ENCODE measurements at regions of chr10 and their contacts with region 1.

Region 1: GRCh38 chr10:3805791-3806461 is 20.9 kb upstream of the KLF6 start:
- DNase-seq: peak; percentile 24 to 74
- ATAC-seq: peak in 7 of 8 donors; percentile 9 to 64 (median 27)
- H3K4me3 ChIP-seq: peak overlapping the region in 6 of 10 donors; percentile 1 to 25 (median 8)
- H3K27ac ChIP-seq: peak overlapping the region; percentile 51 to 95 (median 89)
- H3K4me1 ChIP-seq: peaks cover 12 to 88% (median 71%) of the 10 kb centered on the region in 9 donors
- H3K27me3 ChIP-seq: no peaks in the 10 kb centered on the region
- CTCF ChIP-seq: no peak

Region 2: DNA sequence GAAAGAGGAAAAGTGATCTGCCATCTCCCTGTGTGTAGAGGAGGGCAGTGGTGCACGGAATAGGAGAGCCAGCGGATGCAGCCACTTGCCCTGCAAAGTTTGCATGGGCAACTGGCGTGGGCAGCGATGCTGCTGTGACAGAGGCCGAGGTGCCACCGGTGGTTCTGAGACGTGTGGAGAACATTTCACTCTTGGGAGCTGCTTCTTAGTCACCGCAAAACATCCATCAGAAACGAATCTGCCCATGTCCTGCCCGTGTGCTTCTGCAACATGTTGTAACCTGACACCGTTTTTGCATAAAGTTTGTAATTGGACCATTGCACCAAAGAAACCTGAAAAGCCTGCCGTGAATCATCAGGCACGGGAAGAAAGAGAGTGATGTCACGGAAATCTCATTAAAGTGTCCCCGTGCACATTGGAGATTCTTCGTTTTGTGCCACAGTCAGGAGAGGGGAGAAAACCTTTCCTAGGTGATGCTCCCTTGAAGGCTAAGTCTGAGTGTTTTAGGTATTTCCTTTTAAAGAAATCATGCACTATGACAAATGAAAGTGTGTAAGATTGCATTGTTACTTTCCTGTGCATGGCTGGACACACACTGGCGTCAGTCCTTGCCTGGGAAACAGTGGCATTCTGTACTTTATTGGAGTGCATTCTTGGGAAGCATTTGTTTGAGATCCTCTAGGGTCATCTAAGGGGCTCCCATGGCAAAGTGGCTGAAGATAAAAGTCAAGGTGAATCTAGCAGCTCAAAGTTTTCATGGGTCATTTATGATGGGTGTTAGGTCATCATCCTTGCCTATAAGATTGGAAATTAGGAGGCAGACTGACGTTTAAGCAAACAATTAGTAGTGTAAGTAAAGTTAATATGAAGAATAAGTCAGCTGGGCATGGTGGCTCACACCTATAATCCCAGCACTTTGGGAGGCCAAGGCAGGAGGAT is 323.5 kb before region 1 on chr10:
- intact Hi-C with region 1: no loop called
- DNase-seq: peak in 1 of 2 donors; percentile 39
- ATAC-seq: peak; percentile 68 to 84 (median 77)
- H3K4me3 ChIP-seq: peak overlapping the region in 5 of 10 donors; percentile 0 to 34 (median 23)
- H3K27ac ChIP-seq: peak overlapping the region in 5 of 10 donors; percentile 9 to 47 (median 29)
- H3K4me1 ChIP-seq: peaks cover 10 to 35% (median 27%) of the 10 kb centered on the region in 9 donors
- H3K27me3 ChIP-seq: no peaks in the 10 kb centered on the region
- CTCF ChIP-seq: no peak

Region 3: GRCh38 chr10:3902054-3902808 is 96.3 kb after region 1 on chr10:
- intact Hi-C with region 1: loop called in 1 of 10 experiments (anchors 5 kb)
- DNase-seq: no peak
- ATAC-seq: peak; percentile 44 to 80 (median 72)
- H3K4me3 ChIP-seq: no peak overlapping the region
- H3K27ac ChIP-seq: peak overlapping the region in 7 of 10 donors; percentile 25 to 74 (median 44)
- H3K4me1 ChIP-seq: peaks cover 0 to 23% (median 12%) of the 10 kb centered on the region in 9 donors
- H3K27me3 ChIP-seq: no peaks in the 10 kb centered on the region
- CTCF ChIP-seq: peak in 4 of 9 donors; percentile 7 to 32 (median 22)

Region 4: DNA sequence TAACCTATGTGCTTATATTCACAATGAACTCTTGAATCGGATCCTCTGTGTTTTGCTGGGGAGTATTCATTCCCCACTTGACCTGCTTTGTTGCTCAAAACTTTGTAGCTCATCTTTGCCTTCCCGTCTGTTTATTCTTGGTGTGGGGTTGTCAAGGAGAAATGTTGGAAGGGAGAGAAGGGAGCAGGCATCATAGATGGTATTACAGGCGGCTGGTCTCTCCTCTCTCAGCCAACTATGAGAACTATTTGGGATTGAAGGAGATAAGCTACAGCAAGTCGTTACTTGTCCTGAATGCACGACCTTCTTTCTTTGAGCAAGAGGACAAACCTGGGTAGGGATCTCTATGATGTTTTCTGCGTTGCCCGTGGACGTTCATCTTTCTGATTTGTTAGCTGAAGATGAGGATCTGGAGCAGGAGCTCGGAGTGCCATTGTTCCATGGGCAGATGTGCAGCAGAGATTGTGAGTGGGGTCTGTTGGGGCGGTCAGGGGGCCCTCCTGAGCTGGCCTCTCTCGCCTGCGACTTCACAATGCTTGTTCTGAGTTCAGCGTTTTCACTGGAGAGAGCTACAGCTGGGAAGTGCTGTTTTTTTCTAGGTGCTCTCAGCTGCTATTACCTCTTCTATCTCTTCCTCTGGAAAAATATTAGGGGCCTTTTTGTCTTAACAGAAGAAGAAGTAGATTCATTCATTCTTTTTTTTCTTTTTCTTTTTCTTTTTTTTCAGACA is 106.0 kb after region 1 on chr10:
- intact Hi-C with region 1: loop called in 4 of 10 experiments (anchors 5 to 10 kb)
- DNase-seq: no peak
- ATAC-seq: peak; percentile 68 to 89 (median 82)
- H3K4me3 ChIP-seq: peak overlapping the region in 9 of 10 donors; percentile 19 to 57 (median 48)
- H3K27ac ChIP-seq: peak overlapping the region; percentile 57 to 90 (median 84)
- H3K4me1 ChIP-seq: peaks cover 0 to 17% (median 7%) of the 10 kb centered on the region in 9 donors
- H3K27me3 ChIP-seq: no peaks in the 10 kb centered on the region
- CTCF ChIP-seq: no peak

Region 5: DNA sequence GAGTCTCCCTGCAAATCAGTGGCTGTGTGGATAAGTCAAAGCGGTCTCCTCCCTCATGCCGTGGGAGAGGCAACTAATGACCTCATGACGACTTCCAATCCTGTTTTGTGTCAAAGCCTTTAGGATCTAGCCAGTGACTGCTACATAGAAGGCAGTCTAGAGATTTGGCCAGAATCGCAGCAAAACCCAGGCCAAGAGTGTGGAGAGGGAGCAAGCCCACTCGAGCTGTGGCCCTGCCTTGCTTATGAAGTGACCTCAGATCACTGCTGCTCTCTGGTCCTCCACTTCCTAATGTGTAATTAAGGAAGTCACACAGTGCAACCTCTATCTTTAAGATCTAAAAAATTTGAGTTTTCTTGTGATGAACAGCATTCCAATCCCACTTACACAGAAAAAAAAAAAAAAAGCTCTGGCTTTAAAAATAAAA is 275.8 kb after region 1 on chr10:
- intact Hi-C with region 1: loop called in 1 of 10 experiments (anchors 5 kb)
- DNase-seq: peak in 1 of 2 donors; percentile 43
- ATAC-seq: peak in 7 of 8 donors; percentile 29 to 75 (median 64)
- H3K4me3 ChIP-seq: no peak overlapping the region
- H3K27ac ChIP-seq: peak overlapping the region in 8 of 10 donors; percentile 47 to 87 (median 64)
- H3K4me1 ChIP-seq: peaks cover 4 to 62% (median 51%) of the 10 kb centered on the region in 9 donors
- H3K27me3 ChIP-seq: no peaks in the 10 kb centered on the region
- CTCF ChIP-seq: no peak

Region 6: GRCh38 chr10:4512671-4513240 is 706.8 kb after region 1 on chr10:
- intact Hi-C with region 1: loop called in 1 of 10 experiments (anchors 5 kb)
- DNase-seq: peak; percentile 40 to 58
- ATAC-seq: peak; percentile 49 to 94 (median 76)
- H3K4me3 ChIP-seq: no peak overlapping the region
- H3K27ac ChIP-seq: peak overlapping the region in 9 of 10 donors; percentile 2 to 90 (median 77)
- H3K4me1 ChIP-seq: peaks cover 0 to 48% (median 34%) of the 10 kb centered on the region in 9 donors
- H3K27me3 ChIP-seq: no peaks in the 10 kb centered on the region
- CTCF ChIP-seq: peak; percentile 21 to 71 (median 56)

Measured in heart right ventricle (tissue), 16 donors.